ENCODE measurements at regions of chr4 and their contacts with region 1.

Region 1: GRCh38 chr4:53196882-53197771 is 168.7 kb downstream of the SCFD2 start:
- DNase-seq: peak in 2 of 4 donors; percentile 75 to 83
- ATAC-seq: peak; percentile 88
- H3K4me3 ChIP-seq: no peak overlapping the region
- H3K27ac ChIP-seq: no peak overlapping the region
- H3K4me1 ChIP-seq: peaks cover 0 to 2% of the 10 kb centered on the region in 2 donors
- H3K27me3 ChIP-seq: no peaks in the 10 kb centered on the region
- CTCF ChIP-seq: peak; percentile 60 to 70

Region 2: GRCh38 chr4:52600275-52600674 is 596.9 kb before region 1 on chr4:
- intact Hi-C with region 1: no loop called
- DNase-seq: no peak
- ATAC-seq: no peak
- H3K4me3 ChIP-seq: no peak overlapping the region
- H3K27ac ChIP-seq: no peak overlapping the region
- H3K4me1 ChIP-seq: no peaks in the 10 kb centered on the region
- H3K27me3 ChIP-seq: no peaks in the 10 kb centered on the region
- CTCF ChIP-seq: no peak

Region 3: GRCh38 chr4:53015681-53016080 is 181.4 kb before region 1 on chr4:
- intact Hi-C with region 1: loop called in 1 of 2 experiments (anchors 10 kb)
- DNase-seq: peak in 2 of 4 donors; percentile 65 to 77
- ATAC-seq: peak; percentile 55
- H3K4me3 ChIP-seq: no peak overlapping the region
- H3K27ac ChIP-seq: no peak overlapping the region
- H3K4me1 ChIP-seq: peaks cover 4 to 18% of the 10 kb centered on the region in 2 donors
- H3K27me3 ChIP-seq: no peaks in the 10 kb centered on the region
- CTCF ChIP-seq: peak; percentile 29 to 41

Region 4: GRCh38 chr4:53889326-53890055 is 692.4 kb after region 1 on chr4:
- intact Hi-C with region 1: no loop called
- DNase-seq: peak in 2 of 4 donors; percentile 72 to 83
- ATAC-seq: peak; percentile 59
- H3K4me3 ChIP-seq: no peak overlapping the region
- H3K27ac ChIP-seq: peak overlapping the region in 1 of 2 donors; percentile 50
- H3K4me1 ChIP-seq: no peaks in the 10 kb centered on the region
- H3K27me3 ChIP-seq: no peaks in the 10 kb centered on the region
- CTCF ChIP-seq: no peak

Region 5: GRCh38 chr4:54233277-54233696 is 1036.2 kb after region 1 on chr4:
- intact Hi-C with region 1: loop called in 1 of 2 experiments (anchors 10 kb)
- DNase-seq: peak; percentile 83 to 96 (median 88)
- ATAC-seq: peak; percentile 95
- H3K4me3 ChIP-seq: peak overlapping the region; percentile 28 to 48
- H3K27ac ChIP-seq: peak overlapping the region; percentile 33 to 72
- H3K4me1 ChIP-seq: peaks cover 4 to 46% of the 10 kb centered on the region in 2 donors
- H3K27me3 ChIP-seq: peaks cover 43 to 71% of the 10 kb centered on the region in 2 donors
- CTCF ChIP-seq: peak; percentile 66 to 87